Astrocyte of the spinal cord (primary cell): ENCODE measurements at regions of chr11 and their contacts with region 1.

Region 1: GRCh38 chr11:95835768-95836488 is 45.6 kb downstream of the CEP57 start:
- DNase-seq: peak; percentile 95
- H3K4me3 ChIP-seq: no peak overlapping the region
- CTCF ChIP-seq: peak; percentile 87

Region 2: DNA sequence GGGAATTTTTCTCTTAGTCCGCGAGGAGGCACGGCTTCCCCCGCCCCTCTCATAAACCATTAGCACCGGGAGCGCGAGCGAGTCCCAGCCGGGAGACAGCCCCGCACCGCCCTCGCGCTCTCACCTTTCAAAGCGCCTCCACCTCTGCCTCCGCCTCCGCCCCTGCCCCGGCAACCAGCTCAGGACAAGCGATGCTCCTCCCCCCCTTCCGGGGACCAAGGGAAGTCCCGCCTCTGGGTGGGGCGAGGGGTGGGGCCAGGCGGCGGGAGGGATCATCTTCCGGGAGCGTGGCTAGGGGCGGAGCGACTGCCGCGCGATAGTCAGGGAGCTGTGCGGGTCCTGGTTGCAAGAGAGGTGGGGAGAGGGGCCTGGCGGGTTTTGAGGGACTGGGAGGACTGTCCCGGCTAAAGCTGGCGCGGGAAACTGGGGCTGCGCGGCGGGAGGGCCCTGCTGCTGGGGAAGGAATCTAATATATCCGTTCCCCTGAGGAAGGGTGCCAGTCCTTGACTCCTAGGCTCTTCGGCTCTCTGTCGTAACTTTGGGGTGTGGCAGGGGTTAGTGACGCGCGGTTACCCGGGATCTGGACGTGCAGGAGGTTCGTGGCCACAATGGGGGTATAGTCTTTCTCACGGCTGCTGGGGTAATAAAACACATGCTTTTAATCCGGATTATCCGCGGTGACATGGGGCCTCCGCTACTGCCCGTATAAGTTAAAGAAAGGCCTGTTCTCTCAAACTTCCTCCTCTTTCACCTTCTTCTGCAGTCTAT is 554.0 kb after region 1 on chr11 and contains the starts of genes CCDC82 and JRKL:
- in situ Hi-C with region 1: loop called (anchors 25 kb)
- DNase-seq: peak; percentile 97
- H3K4me3 ChIP-seq: peak within 1 kb of the TSS; percentile 89
- CTCF ChIP-seq: no peak